ENCODE measurements at regions of chr2 and their contacts with region 1.

Region 1: GRCh38 chr2:178414266-178415247 is 36.4 kb downstream of the PRKRA start:
- DNase-seq: peak; percentile 58
- ATAC-seq: peak; percentile 75
- H3K4me3 Mint-ChIP-seq: peak overlapping the region; percentile 94
- H3K27ac Mint-ChIP-seq: peak overlapping the region; percentile 89
- H3K4me1 Mint-ChIP-seq: peaks cover 20% of the 10 kb centered on the region
- H3K27me3 Mint-ChIP-seq: no peaks in the 10 kb centered on the region
- CTCF ChIP-seq: no peak

Region 2: DNA sequence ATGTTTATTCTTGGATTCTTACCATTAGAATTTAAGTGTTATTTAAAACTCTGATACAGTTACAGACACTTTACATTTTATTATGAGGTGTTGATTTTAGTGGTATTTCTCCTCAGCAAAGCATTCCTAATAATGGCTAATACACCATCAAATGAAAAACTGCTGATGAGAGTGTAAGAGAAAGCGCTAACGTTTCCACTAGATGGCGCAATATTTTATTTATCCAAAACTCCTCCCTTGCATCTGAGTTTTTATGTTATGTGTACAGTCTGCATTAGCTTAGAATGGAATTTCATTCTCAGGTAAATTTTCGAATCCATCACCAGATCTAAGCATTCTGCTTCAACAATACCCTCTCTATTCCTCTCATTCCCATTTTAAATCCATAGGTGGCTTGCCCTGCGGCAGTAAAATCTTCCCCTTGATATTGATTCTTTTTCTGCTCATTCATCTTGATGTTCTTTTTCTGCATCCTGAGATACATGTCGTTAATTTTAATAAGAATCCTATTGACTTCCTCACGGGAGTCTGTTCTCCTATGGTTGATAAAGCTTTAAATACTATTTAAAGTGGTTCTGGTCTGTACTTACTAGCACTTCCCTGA is 17.5 kb before region 1 on chr2:
- CTCF ChIA-PET with region 1: interaction called, 57 read pairs
- POLR2A ChIA-PET with region 1: no interaction called
- intact Hi-C with region 1: loop called (anchors 1 kb)
- DNase-seq: no peak
- ATAC-seq: no peak
- H3K4me3 Mint-ChIP-seq: no peak overlapping the region
- H3K27ac Mint-ChIP-seq: no peak overlapping the region
- H3K4me1 Mint-ChIP-seq: no peaks in the 10 kb centered on the region
- H3K27me3 Mint-ChIP-seq: peaks cover 3% of the 10 kb centered on the region
- CTCF ChIP-seq: peak; percentile 79

Region 3: DNA sequence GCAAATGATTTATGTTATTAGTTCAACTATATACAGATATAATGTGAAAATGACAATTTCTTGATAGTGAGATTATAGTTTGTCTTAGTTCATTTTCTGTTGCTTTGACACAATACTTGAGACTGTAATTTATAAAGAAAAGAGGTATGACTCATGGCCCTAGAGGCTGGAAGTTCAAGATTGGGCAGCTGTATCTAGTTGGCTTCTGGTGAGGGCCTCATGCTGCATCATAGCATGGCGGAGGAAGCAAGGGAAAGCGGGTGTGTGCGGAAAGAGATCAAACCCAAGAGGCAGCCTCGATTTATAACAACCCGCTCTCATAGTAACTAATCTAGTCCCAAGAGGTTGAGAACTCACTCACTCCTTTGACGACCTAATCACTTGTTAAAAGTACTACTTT is 77.1 kb after region 1 on chr2:
- CTCF ChIA-PET with region 1: no interaction called
- POLR2A ChIA-PET with region 1: no interaction called
- intact Hi-C with region 1: no loop called
- DNase-seq: no peak
- ATAC-seq: no peak
- H3K4me3 Mint-ChIP-seq: no peak overlapping the region
- H3K27ac Mint-ChIP-seq: no peak overlapping the region
- H3K4me1 Mint-ChIP-seq: peaks cover 2% of the 10 kb centered on the region
- H3K27me3 Mint-ChIP-seq: no peaks in the 10 kb centered on the region
- CTCF ChIP-seq: no peak

Region 4: GRCh38 chr2:178679891-178680290 is 265.3 kb after region 1 on chr2:
- CTCF ChIA-PET with region 1: no interaction called
- POLR2A ChIA-PET with region 1: no interaction called
- intact Hi-C with region 1: no loop called
- DNase-seq: no peak
- ATAC-seq: no peak
- H3K4me3 Mint-ChIP-seq: no peak overlapping the region
- H3K27ac Mint-ChIP-seq: no peak overlapping the region
- H3K4me1 Mint-ChIP-seq: peaks cover 6% of the 10 kb centered on the region
- H3K27me3 Mint-ChIP-seq: no peaks in the 10 kb centered on the region
- CTCF ChIP-seq: no peak

Measured in activated B cell treated with CpG ODN at 0.5 μM for 24 hours (primary cell).